GM23248 (cell line): ENCODE measurements at regions of chr11 and their contacts with region 1.

Region 1: GRCh38 chr11:44936525-44936924 is 14.2 kb downstream of the TP53I11 start:
- DNase-seq: peak; percentile 76
- H3K4me3 ChIP-seq: no peak overlapping the region
- H3K27ac ChIP-seq: no peak overlapping the region
- H3K4me1 ChIP-seq: no peaks in the 10 kb centered on the region
- H3K27me3 ChIP-seq: no peaks in the 10 kb centered on the region

Region 2: GRCh38 chr11:45285930-45286632 is 349.6 kb after region 1 on chr11 and contains the start of gene SYT13:
- in situ Hi-C with region 1: loop called (anchors 25 kb)
- DNase-seq: no peak
- H3K4me3 ChIP-seq: no peak within 1 kb of the TSS
- H3K27ac ChIP-seq: no peak within 1 kb of the TSS
- H3K4me1 ChIP-seq: no peaks in the 10 kb centered on the region
- H3K27me3 ChIP-seq: peaks cover 75% of the 10 kb centered on the region
- total RNA-seq, gene SYT13: not detected in 2 replicates

Region 3: DNA sequence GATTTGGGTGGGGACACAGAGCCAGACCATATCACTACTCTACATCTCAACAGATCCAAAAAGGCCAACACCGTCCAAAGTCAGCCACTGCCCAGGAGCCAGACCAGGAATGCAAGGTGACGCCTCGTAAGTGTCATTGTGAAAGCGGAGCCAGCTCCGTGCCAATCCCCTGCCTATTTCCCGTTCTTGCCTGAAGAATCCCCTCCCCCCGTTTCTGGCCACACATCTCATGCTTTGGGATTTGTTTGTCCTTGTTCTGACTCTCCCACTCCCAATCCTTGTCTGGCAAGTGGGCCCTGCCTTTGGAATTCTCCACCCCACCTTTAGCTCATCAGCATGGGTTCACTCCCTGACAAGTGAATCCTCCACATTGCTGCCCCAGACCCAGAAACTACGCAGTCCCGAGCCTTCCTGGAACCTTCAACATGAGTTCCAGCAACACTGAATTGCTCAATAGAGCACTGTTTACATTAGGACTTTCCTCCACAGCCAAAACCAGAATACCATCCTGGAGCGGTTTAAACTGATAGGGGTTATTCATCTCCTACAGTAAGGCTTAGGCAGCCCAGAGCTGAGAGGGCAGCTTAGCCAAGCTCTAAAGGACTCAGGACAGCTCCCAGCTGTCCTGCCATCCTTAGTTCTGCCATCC is 862.4 kb after region 1 on chr11:
- in situ Hi-C with region 1: loop called (anchors 25 kb)
- DNase-seq: no peak
- H3K4me3 ChIP-seq: no peak overlapping the region
- H3K27ac ChIP-seq: no peak overlapping the region
- H3K4me1 ChIP-seq: no peaks in the 10 kb centered on the region
- H3K27me3 ChIP-seq: 0 out of 2 replicates have a peak, but pooled peaks cover 5% of the 10 kb centered on the region